Natural killer cell (primary cell): ENCODE measurements at regions of chr11 and their contacts with region 1.

Region 1: DNA sequence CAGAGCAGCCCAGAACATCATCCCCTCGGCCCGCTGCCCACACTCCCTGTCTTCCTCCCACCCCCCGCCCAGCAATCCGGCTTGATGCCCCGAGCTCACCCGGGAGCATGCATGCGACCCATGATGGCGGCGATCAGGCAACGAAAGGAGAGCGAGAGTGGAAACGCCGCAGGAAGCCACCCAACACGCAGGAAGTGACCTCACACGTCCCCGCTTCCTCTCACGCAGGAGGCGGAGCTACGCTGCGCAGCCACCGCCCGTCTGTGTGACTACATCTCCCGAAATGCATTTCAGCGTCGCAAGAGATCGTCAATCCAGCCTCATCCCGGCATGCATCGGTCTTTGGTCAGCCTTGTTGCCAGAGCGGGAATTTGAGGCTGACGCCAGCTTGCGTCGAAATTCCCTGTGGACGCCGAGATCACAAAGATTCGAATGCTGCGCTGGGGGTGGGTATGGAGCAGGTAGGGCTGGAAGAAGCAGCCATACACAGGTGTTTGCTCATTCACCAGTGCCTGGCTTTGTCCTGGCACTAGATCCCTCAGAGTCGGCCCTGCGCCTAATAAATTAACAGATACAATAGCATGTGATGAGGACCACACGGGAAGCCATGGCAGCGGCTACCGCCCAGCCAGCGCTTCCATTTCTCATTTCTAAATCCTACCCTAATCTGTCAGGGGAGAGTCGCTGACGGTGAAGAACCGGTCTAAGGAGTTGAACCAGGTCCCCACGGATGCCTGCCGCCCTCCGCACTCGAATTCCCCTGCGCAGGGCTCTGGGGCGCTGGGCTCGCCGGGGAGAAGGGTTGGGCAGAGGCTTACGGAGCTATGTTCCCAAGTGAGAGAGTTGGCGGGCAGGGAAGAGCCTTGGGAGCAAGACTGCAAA is at the start of gene RPS13:
- DNase-seq: peak; percentile 91 to 99
- ATAC-seq: peak; percentile 95 to 99 (median 97)
- H3K4me3 ChIP-seq: peak within 1 kb of the TSS; percentile 96
- H3K4me3 Mint-ChIP-seq: peak within 1 kb of the TSS; percentile 95
- H3K27ac ChIP-seq: peak within 1 kb of the TSS; percentile 92
- H3K27ac Mint-ChIP-seq: peak within 1 kb of the TSS; percentile 94 to 99
- H3K4me1 ChIP-seq: peaks cover 21% of the 10 kb centered on the region
- H3K4me1 Mint-ChIP-seq: peaks cover 42 to 44% of the 10 kb centered on the region in 2 donors
- H3K27me3 ChIP-seq: no peaks in the 10 kb centered on the region
- H3K27me3 Mint-ChIP-seq: no peaks in the 10 kb centered on the region
- CTCF ChIP-seq: no peak
- total RNA-seq, gene RPS13: 579 to 685 (median 654) TPM

Region 2: DNA sequence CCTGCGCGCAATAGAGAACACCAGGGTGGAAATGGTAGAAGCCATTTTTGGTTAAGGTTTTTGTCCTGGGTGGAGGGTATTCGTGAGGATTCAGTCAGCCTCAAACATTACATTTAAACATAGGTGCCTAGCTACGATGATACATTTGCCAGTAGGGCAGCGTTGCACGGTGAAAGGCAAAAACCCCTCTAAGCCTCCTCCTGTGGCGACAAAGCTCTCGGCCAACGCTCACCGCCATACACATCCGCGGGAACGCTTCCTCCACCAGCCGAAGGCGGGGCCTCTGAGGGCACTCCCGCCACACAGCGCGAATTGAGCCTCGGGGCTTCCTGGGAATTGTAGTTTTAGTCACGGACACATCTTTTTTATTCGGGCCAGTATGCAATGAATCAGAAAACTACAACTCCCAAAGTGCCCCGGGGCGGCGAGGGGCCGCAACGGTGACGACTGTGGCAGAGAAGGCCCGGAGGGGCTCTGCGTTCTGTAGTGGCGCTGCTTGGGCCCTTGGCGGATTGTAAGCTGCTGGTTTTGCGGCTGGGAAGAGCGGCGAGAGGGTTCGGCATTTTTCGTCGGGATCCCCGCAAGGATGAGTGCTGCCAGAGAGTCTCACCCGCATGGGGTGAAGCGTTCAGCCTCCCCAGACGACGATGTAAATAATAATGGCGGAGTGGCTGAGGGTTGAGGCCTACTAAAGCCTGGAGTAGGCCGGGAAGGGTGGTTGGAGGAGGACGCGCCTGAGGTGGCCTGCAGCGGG is 339.4 kb before region 1 on chr11 and contains the start of gene C11orf58:
- intact Hi-C with region 1: loop called (anchors 1 kb)
- DNase-seq: peak; percentile 94 to 97
- ATAC-seq: peak; percentile 94 to 99 (median 94)
- H3K4me3 ChIP-seq: peak within 1 kb of the TSS; percentile 79
- H3K4me3 Mint-ChIP-seq: peak within 1 kb of the TSS; percentile 72
- H3K27ac ChIP-seq: peak within 1 kb of the TSS; percentile 94
- H3K27ac Mint-ChIP-seq: no peak within 1 kb of the TSS
- H3K4me1 ChIP-seq: peaks cover 21% of the 10 kb centered on the region
- H3K4me1 Mint-ChIP-seq: peaks cover 13 to 18% of the 10 kb centered on the region in 2 donors
- H3K27me3 ChIP-seq: no peaks in the 10 kb centered on the region
- H3K27me3 Mint-ChIP-seq: no peaks in the 10 kb centered on the region
- CTCF ChIP-seq: no peak
- total RNA-seq, gene C11orf58: 109 to 118 (median 115) TPM